ENCODE measurements at regions of chr6 and their contacts with region 1.

Region 1: DNA sequence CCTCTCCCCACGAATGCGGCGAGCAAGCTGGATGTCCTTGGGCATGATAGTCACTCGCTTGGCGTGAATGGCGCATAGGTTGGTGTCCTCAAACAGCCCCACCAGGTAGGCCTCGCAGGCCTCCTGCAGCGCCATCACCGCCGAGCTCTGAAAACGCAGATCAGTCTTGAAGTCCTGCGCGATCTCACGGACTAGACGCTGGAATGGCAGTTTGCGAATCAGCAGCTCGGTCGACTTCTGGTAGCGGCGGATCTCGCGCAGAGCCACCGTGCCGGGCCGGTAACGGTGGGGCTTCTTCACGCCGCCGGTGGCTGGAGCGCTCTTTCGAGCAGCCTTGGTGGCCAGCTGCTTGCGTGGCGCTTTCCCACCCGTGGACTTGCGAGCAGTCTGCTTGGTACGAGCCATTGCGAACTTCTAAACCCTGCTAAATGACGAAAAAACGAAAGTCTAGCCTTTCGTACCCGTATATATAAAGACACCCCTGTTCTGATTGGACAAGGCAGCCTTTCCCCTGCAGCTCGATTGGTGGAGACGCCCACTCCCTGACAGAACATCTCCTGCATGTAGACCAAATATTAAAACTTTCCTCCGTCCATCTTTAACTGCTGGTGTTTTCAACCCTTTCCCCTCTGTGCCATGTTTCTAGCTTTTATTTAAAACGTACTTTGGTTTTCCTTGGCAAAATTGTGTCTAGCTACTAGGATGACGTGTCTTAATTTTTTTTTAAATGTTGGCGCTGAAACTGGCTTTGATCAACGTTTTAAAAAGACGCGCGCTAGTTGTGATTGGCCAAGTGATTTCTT is 109.8 kb downstream of the HFE start:
- DNase-seq: peak; percentile 55 to 66
- H3K4me3 ChIP-seq: peak overlapping the region; percentile 77
- H3K27ac ChIP-seq: peak overlapping the region; percentile 85
- H3K4me1 ChIP-seq: peaks cover 11% of the 10 kb centered on the region; the same call in 1 of the 2 replicates
- H3K27me3 ChIP-seq: no peaks in the 10 kb centered on the region
- CTCF ChIP-seq: no peak

Region 2: GRCh38 chr6:25278914-25279747 is 917.9 kb before region 1 on chr6 and contains the start of gene CARMIL1:
- CTCF ChIA-PET with region 1: no interaction called
- POLR2A ChIA-PET with region 1: interaction called, 10 read pairs
- intact Hi-C with region 1: no loop called
- DNase-seq: peak; percentile 78 to 94
- H3K4me3 ChIP-seq: peak within 1 kb of the TSS; percentile 96
- H3K27ac ChIP-seq: peak within 1 kb of the TSS; percentile 62
- H3K4me1 ChIP-seq: peaks cover 21% of the 10 kb centered on the region
- H3K27me3 ChIP-seq: no peaks in the 10 kb centered on the region
- CTCF ChIP-seq: peak; percentile 66
- total RNA-seq, gene CARMIL1: 25.7 and 33.1 TPM in 2 replicates

Region 3: GRCh38 chr6:25987848-25988247 is 209.2 kb before region 1 on chr6:
- CTCF ChIA-PET with region 1: no interaction called
- POLR2A ChIA-PET with region 1: no interaction called
- intact Hi-C with region 1: no loop called
- DNase-seq: no peak
- H3K4me3 ChIP-seq: no peak overlapping the region
- H3K27ac ChIP-seq: no peak overlapping the region
- H3K4me1 ChIP-seq: peaks cover 6% of the 10 kb centered on the region; the same call in 1 of the 2 replicates
- H3K27me3 ChIP-seq: no peaks in the 10 kb centered on the region
- CTCF ChIP-seq: no peak

Region 4: DNA sequence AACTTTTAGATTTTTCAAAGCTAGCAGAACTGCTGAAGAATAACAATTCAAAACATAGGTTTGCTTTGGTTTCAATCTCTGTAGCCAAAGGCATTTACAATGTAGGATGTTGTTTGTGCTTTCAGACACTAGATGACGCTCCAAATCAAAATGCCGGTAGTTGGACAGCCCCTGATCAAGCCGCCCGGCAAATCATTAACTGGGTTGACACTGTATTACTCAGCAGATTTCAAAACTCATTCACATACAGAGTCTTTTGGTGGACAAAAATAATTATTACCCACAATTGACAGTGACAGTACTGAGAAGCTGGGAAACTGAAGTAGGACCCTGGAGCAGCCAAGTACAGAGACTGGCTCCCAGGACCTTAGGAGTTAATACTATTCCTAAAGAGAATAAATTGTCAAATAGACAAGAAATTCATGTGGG is 131.1 kb before region 1 on chr6:
- CTCF ChIA-PET with region 1: no interaction called
- POLR2A ChIA-PET with region 1: interaction called, 4 read pairs
- intact Hi-C with region 1: loop called (anchors 10 kb)
- DNase-seq: peak; percentile 65 to 79
- H3K4me3 ChIP-seq: no peak overlapping the region
- H3K27ac ChIP-seq: peak overlapping the region; percentile 69
- H3K4me1 ChIP-seq: peaks cover 36% of the 10 kb centered on the region
- H3K27me3 ChIP-seq: no peaks in the 10 kb centered on the region
- CTCF ChIP-seq: peak; percentile 88

Region 5: DNA sequence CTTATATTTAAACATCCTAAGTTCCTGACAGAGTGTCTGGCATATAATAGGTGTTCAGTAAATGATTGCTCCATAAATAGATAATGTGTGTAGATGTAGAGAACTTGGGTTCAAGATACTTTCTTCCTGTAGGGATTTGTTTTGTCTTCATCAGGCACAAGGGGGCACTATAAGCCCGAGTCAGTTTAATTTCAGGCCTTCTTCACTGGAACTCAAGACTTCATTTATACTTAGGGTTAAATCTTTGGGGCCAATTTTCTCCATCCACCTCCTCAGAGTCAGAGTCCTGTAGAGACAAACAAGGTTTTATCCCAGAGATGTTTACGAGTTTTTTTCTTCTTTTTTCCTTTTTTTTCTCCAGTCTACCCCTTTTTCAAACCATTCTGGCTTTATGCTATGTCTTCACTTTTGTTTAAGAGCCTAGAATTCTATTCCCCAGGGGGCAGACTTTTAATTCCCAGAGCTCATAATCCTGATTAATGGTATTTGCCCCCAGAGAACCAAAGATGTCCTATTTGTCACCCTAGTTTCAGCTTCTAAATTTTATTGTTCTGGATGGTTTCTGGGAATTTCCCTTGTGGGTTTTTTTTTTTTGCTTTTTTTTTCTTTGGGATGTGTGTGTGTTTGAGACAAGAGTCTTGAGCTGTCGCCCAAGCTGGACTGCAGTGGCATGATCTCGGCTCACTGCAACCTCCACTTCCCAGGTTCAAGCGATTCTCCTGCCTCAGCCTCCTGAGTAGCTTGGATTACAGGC is 21.4 kb before region 1 on chr6:
- CTCF ChIA-PET with region 1: interaction called, 4 read pairs
- POLR2A ChIA-PET with region 1: interaction called, 17 read pairs
- intact Hi-C with region 1: no loop called
- DNase-seq: no peak
- H3K4me3 ChIP-seq: no peak overlapping the region
- H3K27ac ChIP-seq: no peak overlapping the region
- H3K4me1 ChIP-seq: peaks cover 23% of the 10 kb centered on the region
- H3K27me3 ChIP-seq: no peaks in the 10 kb centered on the region
- CTCF ChIP-seq: peak; percentile 82

Region 6: GRCh38 chr6:26249957-26250697 is 53.1 kb after region 1 on chr6:
- CTCF ChIA-PET with region 1: no interaction called
- POLR2A ChIA-PET with region 1: no interaction called
- intact Hi-C with region 1: no loop called
- DNase-seq: no peak
- H3K4me3 ChIP-seq: no peak overlapping the region
- H3K27ac ChIP-seq: no peak overlapping the region
- H3K4me1 ChIP-seq: no peaks in the 10 kb centered on the region
- H3K27me3 ChIP-seq: no peaks in the 10 kb centered on the region
- CTCF ChIP-seq: no peak

Region 7: GRCh38 chr6:26285143-26286134 is 88.4 kb after region 1 on chr6:
- CTCF ChIA-PET with region 1: no interaction called
- POLR2A ChIA-PET with region 1: interaction called, 10 read pairs
- intact Hi-C with region 1: loop called (anchors 1 kb)
- DNase-seq: peak; percentile 96 to 99
- H3K4me3 ChIP-seq: peak overlapping the region; percentile 84
- H3K27ac ChIP-seq: peak overlapping the region; percentile 93
- H3K4me1 ChIP-seq: peaks cover 11% of the 10 kb centered on the region
- H3K27me3 ChIP-seq: no peaks in the 10 kb centered on the region
- CTCF ChIP-seq: no peak

Region 8: DNA sequence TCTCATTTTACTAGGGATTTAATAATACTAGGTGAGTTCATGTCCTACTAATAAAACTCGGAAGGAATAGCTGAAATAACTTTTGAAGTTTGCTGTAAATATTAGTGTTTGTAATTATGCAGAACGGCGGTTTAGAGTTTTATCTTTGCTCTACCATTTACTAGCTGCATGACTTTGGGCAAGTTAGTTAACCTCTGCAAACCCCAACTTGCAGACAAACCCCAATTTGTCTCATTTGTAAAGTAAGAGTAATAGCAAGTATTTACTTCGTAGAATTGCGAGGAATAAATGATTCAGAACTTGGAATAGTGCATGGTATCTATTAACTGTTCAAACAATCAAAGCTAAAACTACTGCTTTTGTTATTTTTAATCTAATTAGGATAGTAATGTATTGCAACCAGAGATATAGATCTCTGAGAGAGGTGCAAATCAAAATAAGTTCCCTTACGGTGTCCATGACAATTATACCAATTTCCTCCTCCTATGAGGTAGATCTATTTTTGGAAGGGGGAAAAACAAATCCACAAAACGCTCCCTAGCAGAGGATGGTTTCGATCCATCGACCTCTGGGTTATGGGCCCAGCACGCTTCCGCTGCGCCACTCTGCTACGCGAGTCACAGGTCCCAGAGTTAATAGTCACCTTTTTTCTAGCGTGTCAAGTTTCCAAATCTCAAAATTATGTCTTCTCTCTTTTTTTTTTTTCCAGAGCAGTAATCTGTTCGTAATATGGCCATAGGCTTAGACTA is 132.9 kb after region 1 on chr6:
- CTCF ChIA-PET with region 1: no interaction called
- POLR2A ChIA-PET with region 1: interaction called, 12 read pairs
- intact Hi-C with region 1: no loop called
- DNase-seq: peak; percentile 69 to 71
- H3K4me3 ChIP-seq: peak overlapping the region; percentile 85
- H3K27ac ChIP-seq: peak overlapping the region; percentile 66
- H3K4me1 ChIP-seq: peaks cover 34% of the 10 kb centered on the region; the same call in 1 of the 2 replicates
- H3K27me3 ChIP-seq: no peaks in the 10 kb centered on the region
- CTCF ChIP-seq: no peak

Region 9: DNA sequence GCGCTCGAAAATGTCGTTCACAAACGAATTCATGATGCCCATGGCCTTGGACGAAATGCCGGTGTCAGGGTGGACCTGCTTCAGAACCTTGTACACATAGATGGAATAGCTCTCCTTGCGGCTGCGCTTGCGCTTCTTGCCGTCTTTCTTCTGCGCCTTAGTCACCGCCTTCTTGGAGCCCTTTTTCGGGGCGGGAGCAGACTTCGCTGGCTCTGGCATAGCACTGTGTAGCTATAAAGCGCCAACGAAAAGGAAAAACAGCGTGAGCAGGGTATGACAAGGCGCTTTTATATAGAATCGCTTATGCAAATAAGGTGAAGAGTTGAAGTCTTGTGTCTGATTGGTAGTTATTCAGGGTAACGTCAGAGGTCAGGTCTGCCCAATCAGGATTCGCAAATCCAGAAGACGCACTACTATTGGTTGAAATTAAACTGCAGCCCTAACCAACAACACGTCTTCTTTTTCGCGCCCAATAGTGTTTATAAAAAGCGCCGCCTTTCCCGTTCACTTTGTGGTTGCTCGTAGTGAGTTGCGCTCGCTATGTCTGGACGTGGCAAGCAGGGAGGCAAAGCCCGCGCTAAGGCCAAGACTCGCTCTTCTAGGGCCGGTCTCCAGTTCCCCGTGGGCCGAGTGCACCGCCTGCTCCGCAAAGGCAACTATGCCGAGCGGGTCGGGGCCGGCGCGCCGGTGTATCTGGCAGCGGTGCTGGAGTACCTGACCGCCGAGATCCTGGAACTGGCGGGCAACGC is 935.7 kb after region 1 on chr6:
- CTCF ChIA-PET with region 1: no interaction called
- POLR2A ChIA-PET with region 1: interaction called, 45 read pairs
- intact Hi-C with region 1: loop called (anchors 5 kb)
- DNase-seq: peak; percentile 95 to 98
- H3K4me3 ChIP-seq: peak overlapping the region; percentile 74
- H3K27ac ChIP-seq: peak overlapping the region; percentile 80
- H3K4me1 ChIP-seq: peaks cover 16% of the 10 kb centered on the region
- H3K27me3 ChIP-seq: no peaks in the 10 kb centered on the region
- CTCF ChIP-seq: no peak